Vagina (tissue), 2 donors: ENCODE measurements at regions of chr2 and their contacts with region 1.

Region 1: GRCh38 chr2:191369036-191369435 is 123.8 kb downstream of the MYO1B start:
- DNase-seq: no peak
- H3K4me3 ChIP-seq: no peak overlapping the region
- H3K27ac ChIP-seq: no peak overlapping the region
- H3K4me1 ChIP-seq: no peaks in the 10 kb centered on the region
- H3K27me3 ChIP-seq: no peaks in the 10 kb centered on the region
- CTCF ChIP-seq: no peak
- POLR2A ChIP-seq: no peak

Region 2: GRCh38 chr2:191245046-191245868 is 123.8 kb before region 1 on chr2 and contains the start of gene MYO1B:
- intact Hi-C with region 1: loop called (anchors 10 kb)
- DNase-seq: no peak
- H3K4me3 ChIP-seq: peak within 1 kb of the TSS; percentile 88 to 94
- H3K27ac ChIP-seq: peak within 1 kb of the TSS; percentile 75
- H3K4me1 ChIP-seq: peaks cover 40% of the 10 kb centered on the region
- H3K27me3 ChIP-seq: no peaks in the 10 kb centered on the region
- CTCF ChIP-seq: peak in 2 of 3 experiments; percentile 18 to 63
- POLR2A ChIP-seq: no peak
- total RNA-seq, gene MYO1B: 43.7 TPM

Region 3: GRCh38 chr2:191255756-191256312 is 113.2 kb before region 1 on chr2:
- intact Hi-C with region 1: no loop called
- DNase-seq: no peak
- H3K4me3 ChIP-seq: no peak overlapping the region
- H3K27ac ChIP-seq: no peak overlapping the region
- H3K4me1 ChIP-seq: peaks cover 16% of the 10 kb centered on the region
- H3K27me3 ChIP-seq: no peaks in the 10 kb centered on the region
- CTCF ChIP-seq: no peak
- POLR2A ChIP-seq: no peak